AG04450 (cell line): ENCODE measurements at regions of chr5 and their contacts with region 1.

Region 1: DNA sequence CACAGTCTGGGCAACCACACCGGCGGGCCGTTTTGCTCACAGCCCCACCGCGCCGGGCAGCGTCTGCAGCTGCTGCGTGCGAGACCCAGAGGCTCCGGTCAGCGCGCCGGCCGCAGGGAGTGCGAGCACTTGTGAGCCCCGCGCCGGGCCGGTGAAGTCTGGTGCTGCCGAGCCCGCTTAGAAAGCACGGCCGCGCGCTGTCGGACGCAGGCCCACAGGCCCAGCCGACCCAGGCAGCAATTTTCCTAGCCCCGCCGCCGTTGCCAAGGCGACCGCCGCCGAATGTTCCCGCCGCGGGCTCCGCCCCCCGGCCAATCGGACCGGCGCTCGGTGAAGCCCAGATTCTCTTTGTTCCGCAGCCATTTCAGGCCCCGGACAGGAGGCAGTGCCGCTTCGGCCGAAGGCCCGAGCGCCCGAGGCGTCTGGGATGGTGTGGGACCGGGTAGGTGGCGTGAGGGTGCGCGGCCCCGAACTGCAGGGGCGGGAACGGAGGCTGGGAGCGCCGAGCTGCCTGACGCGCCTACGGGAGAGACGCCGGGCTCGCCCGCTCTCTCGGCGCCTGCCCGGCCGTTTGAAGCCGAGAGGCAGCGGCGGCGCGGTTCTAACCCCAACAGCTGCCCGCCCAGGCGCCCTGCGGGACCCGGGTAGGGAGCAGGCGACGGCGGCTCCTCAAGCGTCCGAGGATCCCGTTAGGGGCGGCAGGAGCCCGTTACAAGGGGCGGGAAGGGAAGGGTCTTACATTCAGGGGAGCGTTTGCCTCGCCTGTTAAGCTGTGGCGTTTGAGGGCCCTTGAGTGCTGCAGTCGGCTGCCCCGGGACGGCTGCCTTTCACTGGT is at the start of gene TNPO1:
- DNase-seq: peak; percentile 79
- H3K4me3 ChIP-seq: peak within 1 kb of the TSS; percentile 74
- H3K27ac ChIP-seq: peak within 1 kb of the TSS; percentile 98
- H3K27me3 ChIP-seq: no peaks in the 10 kb centered on the region
- CTCF ChIP-seq: no peak
- polyA plus RNA-seq, gene TNPO1: 110 and 134 TPM in 2 replicates

Region 2: DNA sequence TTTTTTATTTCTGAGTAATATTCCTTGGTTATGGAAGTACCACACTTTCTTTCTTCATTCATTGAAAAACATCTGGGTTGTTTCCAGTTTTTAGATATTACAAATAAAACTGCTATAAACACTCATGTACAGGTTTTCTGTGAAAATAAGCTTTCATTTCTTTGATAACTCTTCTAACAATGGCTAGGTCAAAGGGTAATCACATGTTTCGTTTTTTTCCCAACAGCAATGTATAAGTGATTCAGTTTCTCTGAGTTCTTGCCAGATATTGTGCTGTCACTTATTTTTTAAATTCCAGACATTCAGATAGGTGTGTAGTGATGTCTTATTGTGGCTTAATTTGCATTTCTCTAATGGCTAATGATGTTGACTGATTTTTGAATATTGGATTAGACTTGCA is 16.8 kb before region 1 on chr5:
- CTCF ChIA-PET with region 1: no interaction called
- POLR2A ChIA-PET with region 1: interaction called, 11 read pairs
- DNase-seq: no peak
- H3K4me3 ChIP-seq: no peak overlapping the region
- H3K27ac ChIP-seq: no peak overlapping the region
- H3K27me3 ChIP-seq: peaks cover 10% of the 10 kb centered on the region
- CTCF ChIP-seq: no peak

Region 3: DNA sequence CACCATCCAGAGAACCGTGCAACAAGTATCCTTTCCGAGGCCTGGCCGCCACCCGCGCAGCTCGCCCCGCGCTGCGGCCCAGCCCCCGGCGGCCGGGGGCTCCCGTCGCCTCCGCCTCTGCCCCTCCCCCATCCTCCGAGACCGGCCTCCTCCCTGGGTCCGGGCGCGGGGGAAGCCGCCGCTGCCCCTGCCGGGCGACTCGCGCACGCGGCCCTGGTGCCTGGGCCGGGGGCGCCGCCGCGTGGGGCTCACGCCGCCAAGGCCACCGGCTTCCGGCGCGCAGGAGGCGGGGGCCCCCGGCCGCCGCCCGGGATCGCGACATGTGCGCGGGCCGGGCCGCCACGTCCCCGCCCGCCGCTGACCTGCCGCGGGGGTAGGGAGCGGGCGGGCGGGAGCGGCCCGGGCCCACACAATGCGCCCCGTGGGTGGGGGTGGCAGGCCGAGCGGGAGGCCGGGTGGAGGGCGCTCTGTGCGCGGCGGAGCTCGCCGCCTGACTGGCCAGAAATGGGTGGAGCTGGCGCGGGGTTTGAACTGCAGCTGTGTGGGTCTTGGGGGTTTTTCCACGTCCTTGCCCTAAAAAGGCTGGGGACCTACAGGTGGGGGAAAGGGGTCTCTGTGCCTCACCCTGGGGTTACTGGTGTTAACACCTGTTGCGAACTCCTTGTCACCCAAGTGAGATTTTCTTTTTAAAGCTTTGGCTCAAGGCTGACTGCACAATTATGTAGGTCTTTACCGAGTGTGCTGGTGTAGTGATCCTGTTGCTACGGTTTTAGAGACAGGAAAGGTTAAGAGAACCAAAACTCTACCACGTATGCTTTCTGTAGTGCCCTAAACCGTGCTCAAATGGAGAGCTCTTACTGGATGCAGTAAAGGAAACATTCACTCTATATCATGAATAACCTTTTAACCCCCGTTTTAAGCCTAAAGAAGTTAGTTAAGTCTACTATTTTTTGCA is 32.2 kb after region 1 on chr5:
- CTCF ChIA-PET with region 1: interaction called, 4 read pairs
- POLR2A ChIA-PET with region 1: interaction called, 16 read pairs
- DNase-seq: no peak
- H3K4me3 ChIP-seq: peak overlapping the region; percentile 87
- H3K27ac ChIP-seq: peak overlapping the region; percentile 81
- H3K27me3 ChIP-seq: no peaks in the 10 kb centered on the region
- CTCF ChIP-seq: no peak